Mammary epithelial cell (primary cell): ENCODE measurements at regions of chr2 and their contacts with region 1.

Region 1: DNA sequence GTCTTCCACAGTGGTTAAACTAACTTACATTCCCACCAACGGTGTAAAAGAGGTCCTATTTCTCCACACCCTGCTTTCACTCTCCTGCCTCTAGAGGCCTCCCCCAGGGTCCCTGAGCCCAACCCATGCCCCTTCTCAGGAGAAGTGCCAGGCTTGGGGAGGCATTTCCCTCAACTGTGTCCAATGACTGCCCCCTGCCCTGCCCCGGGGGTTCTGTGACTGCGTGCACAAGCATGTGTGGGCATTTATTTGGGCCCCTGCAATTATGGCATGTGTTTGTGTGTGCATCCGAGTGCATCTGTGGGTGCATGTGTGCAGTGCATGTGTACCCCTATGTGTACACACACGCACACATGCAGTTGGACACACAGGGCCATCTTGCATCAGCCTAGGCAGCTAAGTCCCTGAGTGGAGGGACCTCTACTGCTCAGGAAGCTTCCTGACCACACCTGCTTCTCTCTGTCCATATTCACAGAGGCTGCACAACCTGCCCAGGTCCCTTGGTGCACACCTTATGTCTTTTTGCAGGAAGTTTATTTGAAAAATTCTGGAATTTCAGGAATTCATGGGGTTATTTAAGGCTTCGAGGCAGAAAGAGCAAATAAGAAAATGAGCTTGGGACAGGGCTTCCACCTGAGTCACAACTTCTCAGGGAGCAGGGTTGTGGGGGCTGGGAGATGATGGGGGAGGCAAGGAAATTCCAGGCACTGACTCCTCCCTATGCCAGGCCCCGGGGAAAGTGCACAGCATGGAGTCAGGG is 57.5 kb downstream of the INHBB start:
- DNase-seq: no peak
- H3K4me3 ChIP-seq: no peak overlapping the region
- H3K27ac ChIP-seq: no peak overlapping the region
- H3K4me1 ChIP-seq: no peaks in the 10 kb centered on the region
- H3K27me3 ChIP-seq: no peaks in the 10 kb centered on the region
- CTCF ChIP-seq: no peak

Region 2: GRCh38 chr2:120367649-120368048 is 35.8 kb before region 1 on chr2:
- CTCF ChIA-PET with region 1: no interaction called
- dilution Hi-C with region 1: loop called (anchors 5 kb)
- in situ Hi-C with region 1: no loop called
- intact Hi-C with region 1: no loop called
- DNase-seq: peak; percentile 21
- H3K4me3 ChIP-seq: no peak overlapping the region
- H3K27ac ChIP-seq: no peak overlapping the region
- H3K4me1 ChIP-seq: peaks cover 2% of the 10 kb centered on the region
- H3K27me3 ChIP-seq: no peaks in the 10 kb centered on the region
- CTCF ChIP-seq: no peak